ENCODE measurements at regions of chr13 and their contacts with region 1.

Region 1: GRCh38 chr13:33610471-33611015 is 207.4 kb upstream of the RFC3 start:
- DNase-seq: peak; percentile 8
- H3K4me3 Mint-ChIP-seq: peak overlapping the region; percentile 82
- H3K27ac Mint-ChIP-seq: peak overlapping the region; percentile 95
- H3K4me1 Mint-ChIP-seq: peaks cover 46% of the 10 kb centered on the region
- H3K27me3 Mint-ChIP-seq: no peaks in the 10 kb centered on the region

Region 2: GRCh38 chr13:33080972-33081590 is 529.5 kb before region 1 on chr13:
- intact Hi-C with region 1: loop called (anchors 10 kb)
- DNase-seq: no peak
- H3K4me3 Mint-ChIP-seq: no peak overlapping the region
- H3K27ac Mint-ChIP-seq: no peak overlapping the region
- H3K4me1 Mint-ChIP-seq: peaks cover 18% of the 10 kb centered on the region
- H3K27me3 Mint-ChIP-seq: peaks cover 9% of the 10 kb centered on the region

Region 3: GRCh38 chr13:33228648-33229445 is 381.7 kb before region 1 on chr13:
- intact Hi-C with region 1: loop called (anchors 2 kb)
- DNase-seq: no peak
- H3K4me3 Mint-ChIP-seq: no peak overlapping the region
- H3K27ac Mint-ChIP-seq: no peak overlapping the region
- H3K4me1 Mint-ChIP-seq: peaks cover 11% of the 10 kb centered on the region
- H3K27me3 Mint-ChIP-seq: no peaks in the 10 kb centered on the region

Region 4: GRCh38 chr13:33639626-33640080 is 29.1 kb after region 1 on chr13:
- intact Hi-C with region 1: loop called (anchors 1 kb)
- DNase-seq: no peak
- H3K4me3 Mint-ChIP-seq: no peak overlapping the region
- H3K27ac Mint-ChIP-seq: peak overlapping the region; percentile 75
- H3K4me1 Mint-ChIP-seq: peaks cover 45% of the 10 kb centered on the region
- H3K27me3 Mint-ChIP-seq: peaks cover 2% of the 10 kb centered on the region

Region 5: GRCh38 chr13:33817901-33818706 is 207.6 kb after region 1 on chr13 and contains the start of gene RFC3:
- intact Hi-C with region 1: loop called (anchors 2 kb)
- DNase-seq: peak; percentile 90
- H3K4me3 Mint-ChIP-seq: peak within 1 kb of the TSS; percentile 97
- H3K27ac Mint-ChIP-seq: peak within 1 kb of the TSS; percentile 90
- H3K4me1 Mint-ChIP-seq: peaks cover 46% of the 10 kb centered on the region
- H3K27me3 Mint-ChIP-seq: peaks cover 8% of the 10 kb centered on the region
- total RNA-seq, gene RFC3: 74.7 and 78.0 TPM in 2 replicates